CD4-positive, alpha-beta memory T cell (primary cell): ENCODE measurements at regions of chr7 and their contacts with region 1.

Region 1: DNA sequence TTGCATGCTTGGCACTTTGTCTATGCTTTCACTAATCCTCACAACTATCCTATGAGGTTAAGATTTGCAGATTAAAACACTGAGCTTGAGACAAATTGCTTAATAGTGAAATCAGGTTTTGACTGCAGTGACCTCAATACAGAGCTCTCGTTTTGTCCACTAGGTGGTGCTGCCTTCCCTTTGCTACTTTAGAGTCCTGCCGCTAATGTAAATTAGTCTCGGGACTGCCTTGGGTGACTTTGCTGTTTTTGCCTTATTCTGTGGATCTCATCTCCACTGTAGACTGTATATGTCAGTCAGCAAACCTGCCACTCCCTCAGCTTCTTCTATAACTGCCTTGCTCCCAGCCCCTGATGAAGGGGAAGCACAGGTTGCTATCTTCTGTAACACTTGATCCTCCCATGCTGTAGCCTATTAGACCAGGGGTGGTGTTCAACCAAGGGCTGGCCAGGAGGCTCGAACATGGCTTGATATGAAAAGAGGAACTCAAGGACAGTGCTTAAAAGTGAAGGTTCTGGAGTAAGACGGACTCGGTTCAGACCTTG is 26.0 kb downstream of the ASB4 start:
- DNase-seq: peak in 4 of 5 donors; percentile 9 to 33 (median 14)
- H3K4me3 ChIP-seq: no peak overlapping the region
- H3K4me3 Mint-ChIP-seq: no peak overlapping the region
- H3K27ac ChIP-seq: no peak overlapping the region
- H3K27ac Mint-ChIP-seq: no peak overlapping the region
- H3K4me1 ChIP-seq: no peaks in the 10 kb centered on the region
- H3K4me1 Mint-ChIP-seq: peaks cover 0 to 1% (median 0%) of the 10 kb centered on the region in 4 donors
- H3K27me3 ChIP-seq: no peaks in the 10 kb centered on the region
- H3K27me3 Mint-ChIP-seq: peaks cover 5 to 6% of the 10 kb centered on the region in 2 donors

Region 2: DNA sequence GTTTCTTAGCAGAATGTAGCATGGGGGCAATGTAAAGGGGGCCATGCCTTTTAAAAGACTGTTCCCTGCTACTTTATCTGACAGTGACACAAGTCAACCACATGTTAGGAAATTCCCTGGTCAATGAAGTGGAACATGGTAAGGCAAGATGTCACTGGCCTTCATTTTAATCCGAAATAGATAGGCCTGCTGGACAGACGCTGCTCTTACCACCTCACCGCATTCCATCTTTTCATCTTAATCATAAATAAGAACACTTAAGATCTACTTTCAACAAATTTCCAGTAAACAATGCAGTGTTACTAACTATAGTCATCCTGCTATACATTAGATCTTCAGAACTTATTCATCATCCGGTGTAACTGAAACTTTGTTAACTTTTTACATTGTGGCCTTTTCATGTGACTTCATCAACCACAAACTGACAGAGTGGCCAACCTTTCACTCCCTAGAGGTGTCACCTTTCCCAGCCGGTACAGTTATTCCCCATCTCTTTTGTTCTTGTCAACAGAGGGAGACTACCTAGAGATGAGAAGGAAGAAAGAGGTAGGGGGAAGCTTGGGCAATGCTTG is 10.4 kb before region 1 on chr7:
- CTCF ChIA-PET with region 1: interaction called, 12 read pairs
- POLR2A ChIA-PET with region 1: interaction called, 3 read pairs
- intact Hi-C with region 1: no loop called
- DNase-seq: no peak
- H3K4me3 ChIP-seq: no peak overlapping the region
- H3K4me3 Mint-ChIP-seq: peak overlapping the region in 1 of 8 donors; percentile 28
- H3K27ac ChIP-seq: no peak overlapping the region
- H3K27ac Mint-ChIP-seq: peak overlapping the region in 2 of 7 donors; percentile 10 to 50
- H3K4me1 ChIP-seq: no peaks in the 10 kb centered on the region
- H3K4me1 Mint-ChIP-seq: peaks cover 12 to 17% (median 15%) of the 10 kb centered on the region in 4 donors
- H3K27me3 ChIP-seq: no peaks in the 10 kb centered on the region
- H3K27me3 Mint-ChIP-seq: peaks cover 3 to 6% of the 10 kb centered on the region in 2 donors

Region 3: DNA sequence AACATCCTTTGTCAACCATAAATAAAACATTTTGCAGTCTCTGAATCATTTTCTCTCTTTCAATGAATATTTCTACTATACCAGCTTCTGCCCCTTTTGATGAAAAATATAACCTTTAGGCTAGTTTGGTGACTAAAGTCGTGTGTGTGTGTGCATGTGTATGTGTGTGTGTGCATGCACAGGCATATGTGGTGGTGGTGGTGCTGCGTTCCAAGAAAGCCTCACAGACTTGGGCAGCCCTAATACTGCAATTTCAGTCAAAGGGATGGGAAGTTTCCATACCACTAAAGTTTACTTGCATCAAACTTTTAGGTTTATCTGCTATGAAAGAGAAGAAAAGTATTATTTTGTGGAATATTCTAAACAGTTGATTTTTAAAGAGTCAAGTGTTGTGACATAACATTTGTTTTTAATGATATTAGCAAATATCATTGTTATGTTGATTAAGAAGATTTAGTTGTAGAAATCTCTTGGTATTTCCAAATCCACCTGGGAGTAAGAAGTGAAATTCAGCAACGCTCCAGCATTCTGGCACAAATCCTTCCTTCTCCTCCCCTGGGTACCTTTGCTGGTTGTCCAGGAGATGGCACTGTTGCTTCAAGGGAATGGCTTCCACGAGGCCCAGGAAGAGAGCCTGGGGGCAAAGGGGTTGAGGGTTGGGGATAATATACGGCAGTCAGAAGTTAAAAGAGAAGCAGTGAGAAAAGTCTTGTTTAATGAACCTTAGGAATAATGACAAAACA is 15.4 kb after region 1 on chr7:
- CTCF ChIA-PET with region 1: interaction called, 19 read pairs
- POLR2A ChIA-PET with region 1: no interaction called
- intact Hi-C with region 1: no loop called
- DNase-seq: no peak
- H3K4me3 ChIP-seq: no peak overlapping the region
- H3K4me3 Mint-ChIP-seq: no peak overlapping the region
- H3K27ac ChIP-seq: no peak overlapping the region
- H3K27ac Mint-ChIP-seq: no peak overlapping the region
- H3K4me1 ChIP-seq: no peaks in the 10 kb centered on the region
- H3K4me1 Mint-ChIP-seq: no peaks in the 10 kb centered on the region
- H3K27me3 ChIP-seq: no peaks in the 10 kb centered on the region
- H3K27me3 Mint-ChIP-seq: peaks cover 2 to 3% of the 10 kb centered on the region in 2 donors

Region 4: DNA sequence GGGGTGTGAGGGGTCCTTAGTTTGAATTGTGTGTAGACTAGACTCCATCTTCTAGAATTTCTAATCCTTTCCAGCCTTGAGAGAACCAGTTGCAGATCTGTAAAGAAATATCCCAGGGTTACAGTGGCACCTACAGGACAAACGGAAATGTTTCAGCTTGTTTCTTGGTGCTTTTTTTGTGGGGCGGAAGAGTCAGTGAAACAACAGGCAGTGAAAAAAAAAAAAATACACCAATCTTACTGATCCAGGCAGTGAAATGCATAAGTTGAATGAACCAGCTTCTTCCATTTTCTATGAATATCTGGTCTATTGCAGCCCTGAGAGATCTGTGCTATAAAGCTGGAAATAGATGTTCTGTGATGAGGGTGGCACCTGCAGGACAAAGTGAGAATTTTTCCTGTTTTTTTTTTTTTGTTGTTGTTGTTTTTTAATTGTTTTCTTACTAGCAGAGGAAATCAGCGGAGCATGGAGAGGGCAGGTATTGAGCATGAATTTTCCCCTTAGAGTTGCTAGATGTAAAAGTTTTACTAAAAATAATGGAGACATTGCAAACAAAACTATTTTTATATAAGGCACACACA is 178.7 kb after region 1 on chr7:
- CTCF ChIA-PET with region 1: interaction called, 4 read pairs
- POLR2A ChIA-PET with region 1: no interaction called
- intact Hi-C with region 1: loop called (anchors 5 kb)
- DNase-seq: no peak
- H3K4me3 ChIP-seq: no peak overlapping the region
- H3K4me3 Mint-ChIP-seq: peak overlapping the region in 1 of 8 donors; percentile 18
- H3K27ac ChIP-seq: no peak overlapping the region
- H3K27ac Mint-ChIP-seq: no peak overlapping the region
- H3K4me1 ChIP-seq: no peaks in the 10 kb centered on the region
- H3K4me1 Mint-ChIP-seq: peaks cover 0 to 2% (median 0%) of the 10 kb centered on the region in 4 donors
- H3K27me3 ChIP-seq: no peaks in the 10 kb centered on the region
- H3K27me3 Mint-ChIP-seq: peaks cover 0 to 2% of the 10 kb centered on the region in 2 donors

Region 5: GRCh38 chr7:95871078-95871782 is 359.4 kb after region 1 on chr7:
- CTCF ChIA-PET with region 1: no interaction called
- POLR2A ChIA-PET with region 1: no interaction called
- intact Hi-C with region 1: loop called (anchors 5 kb)
- DNase-seq: no peak
- H3K4me3 ChIP-seq: no peak overlapping the region
- H3K4me3 Mint-ChIP-seq: no peak overlapping the region
- H3K27ac ChIP-seq: no peak overlapping the region
- H3K27ac Mint-ChIP-seq: no peak overlapping the region
- H3K4me1 ChIP-seq: no peaks in the 10 kb centered on the region
- H3K4me1 Mint-ChIP-seq: no peaks in the 10 kb centered on the region
- H3K27me3 ChIP-seq: no peaks in the 10 kb centered on the region
- H3K27me3 Mint-ChIP-seq: peaks cover 5 to 7% of the 10 kb centered on the region in 2 donors